ACHN (cell line): ENCODE measurements at regions of chr5 and their contacts with region 1.

Region 1: GRCh38 chr5:153147891-153148623 is 342.4 kb upstream of the GRIA1 start:
- DNase-seq: peak; percentile 52

Region 2: GRCh38 chr5:152560512-152561137 is 587.4 kb before region 1 on chr5:
- in situ Hi-C with region 1: loop called (anchors 25 kb)
- DNase-seq: peak; percentile 47